Heart left ventricle (tissue), 16 donors: ENCODE measurements at regions of chr5 and their contacts with region 1.

Region 1: GRCh38 chr5:128201065-128201926 is 117.7 kb downstream of the SLC12A2 start:
- DNase-seq: peak; percentile 67 to 88 (median 77)
- ATAC-seq: peak in 3 of 4 donors; percentile 79 to 88 (median 83)
- H3K4me3 ChIP-seq: peak overlapping the region in 6 of 12 donors; percentile 13 to 35 (median 21)
- H3K27ac ChIP-seq: no peak overlapping the region
- H3K4me1 ChIP-seq: peaks cover 0 to 20% (median 5%) of the 10 kb centered on the region in 12 donors
- H3K27me3 ChIP-seq: no peaks in the 10 kb centered on the region
- CTCF ChIP-seq: peak; percentile 82 to 95 (median 88)
- POLR2A ChIP-seq: no peak

Region 2: GRCh38 chr5:127739807-127740384 is 461.4 kb before region 1 on chr5:
- intact Hi-C with region 1: loop called in 1 of 10 experiments (anchors 2 kb)
- DNase-seq: no peak
- ATAC-seq: no peak
- H3K4me3 ChIP-seq: peak overlapping the region in 1 of 12 donors; percentile 21
- H3K27ac ChIP-seq: no peak overlapping the region
- H3K4me1 ChIP-seq: no peaks in the 10 kb centered on the region
- H3K27me3 ChIP-seq: no peaks in the 10 kb centered on the region
- CTCF ChIP-seq: no peak
- POLR2A ChIP-seq: no peak

Region 3: GRCh38 chr5:127746756-127747155 is 454.5 kb before region 1 on chr5:
- intact Hi-C with region 1: loop called in 2 of 10 experiments (anchors 2 kb)
- DNase-seq: no peak
- ATAC-seq: no peak
- H3K4me3 ChIP-seq: no peak overlapping the region
- H3K27ac ChIP-seq: no peak overlapping the region
- H3K4me1 ChIP-seq: no peaks in the 10 kb centered on the region
- H3K27me3 ChIP-seq: no peaks in the 10 kb centered on the region
- CTCF ChIP-seq: peak; percentile 33 to 64 (median 46)
- POLR2A ChIP-seq: no peak

Region 4: DNA sequence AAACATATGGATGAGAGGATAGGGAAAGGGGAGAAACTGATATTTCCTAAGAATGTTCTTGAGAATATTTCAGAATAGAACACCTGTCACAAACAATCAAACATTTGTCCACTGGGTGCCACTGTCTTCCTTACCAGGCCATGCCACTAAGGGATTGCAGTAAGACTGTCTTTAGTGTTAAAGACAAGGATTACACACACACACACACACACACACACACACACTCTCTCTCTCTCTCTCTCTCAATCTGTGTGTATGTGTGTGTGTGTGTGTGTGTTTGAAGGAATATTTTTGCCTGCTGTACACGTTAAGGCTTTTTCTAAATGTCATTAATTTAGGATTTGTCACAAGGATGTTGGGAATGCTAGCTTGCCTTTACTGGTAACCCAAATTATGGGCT is 443.7 kb before region 1 on chr5:
- intact Hi-C with region 1: loop called in 9 of 10 experiments (anchors 2 to 5 kb)
- DNase-seq: peak in 2 of 5 donors; percentile 22 to 23
- ATAC-seq: peak; percentile 47 to 88 (median 82)
- H3K4me3 ChIP-seq: no peak overlapping the region
- H3K27ac ChIP-seq: no peak overlapping the region
- H3K4me1 ChIP-seq: peaks cover 0 to 14% (median 5%) of the 10 kb centered on the region in 12 donors
- H3K27me3 ChIP-seq: no peaks in the 10 kb centered on the region
- CTCF ChIP-seq: peak; percentile 32 to 63 (median 46)
- POLR2A ChIP-seq: no peak

Region 5: DNA sequence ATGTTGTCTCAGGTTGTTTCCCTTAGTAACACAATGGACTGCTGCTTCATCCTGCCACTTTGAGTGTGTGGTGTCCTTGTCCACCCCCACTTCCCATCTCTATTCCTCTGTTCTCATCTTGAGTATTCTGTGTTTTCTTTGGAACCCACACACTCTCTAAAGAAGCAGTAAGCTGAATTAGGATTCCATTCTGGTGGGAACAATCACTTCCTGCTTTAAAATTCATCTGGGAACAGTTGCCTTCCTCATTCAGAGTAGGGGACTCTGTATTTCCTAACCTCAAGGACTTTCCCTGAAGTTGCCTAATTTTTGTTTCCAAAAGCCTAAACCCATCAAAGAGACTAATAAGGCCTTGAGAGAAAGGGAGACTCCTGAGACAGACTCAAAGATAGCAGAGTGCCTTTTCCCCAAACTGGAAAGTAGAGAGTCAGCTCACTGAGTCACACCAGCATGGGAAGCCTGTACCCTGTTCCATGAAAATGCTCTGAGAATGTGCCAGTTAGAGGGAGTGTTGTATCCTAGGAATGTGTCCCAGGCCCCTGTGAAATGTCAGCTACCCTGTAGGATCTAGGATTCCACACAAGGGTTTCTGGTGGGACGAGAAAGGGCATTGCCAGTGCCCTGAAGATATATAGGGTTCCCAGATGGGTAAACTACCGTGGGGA is 434.5 kb before region 1 on chr5:
- intact Hi-C with region 1: loop called in 1 of 10 experiments (anchors 5 kb)
- DNase-seq: no peak
- ATAC-seq: peak in 2 of 4 donors; percentile 27 to 42
- H3K4me3 ChIP-seq: no peak overlapping the region
- H3K27ac ChIP-seq: peak overlapping the region in 3 of 12 donors; percentile 1 to 51 (median 7)
- H3K4me1 ChIP-seq: peaks cover 0 to 23% (median 8%) of the 10 kb centered on the region in 12 donors
- H3K27me3 ChIP-seq: no peaks in the 10 kb centered on the region
- CTCF ChIP-seq: no peak
- POLR2A ChIP-seq: no peak

Region 6: DNA sequence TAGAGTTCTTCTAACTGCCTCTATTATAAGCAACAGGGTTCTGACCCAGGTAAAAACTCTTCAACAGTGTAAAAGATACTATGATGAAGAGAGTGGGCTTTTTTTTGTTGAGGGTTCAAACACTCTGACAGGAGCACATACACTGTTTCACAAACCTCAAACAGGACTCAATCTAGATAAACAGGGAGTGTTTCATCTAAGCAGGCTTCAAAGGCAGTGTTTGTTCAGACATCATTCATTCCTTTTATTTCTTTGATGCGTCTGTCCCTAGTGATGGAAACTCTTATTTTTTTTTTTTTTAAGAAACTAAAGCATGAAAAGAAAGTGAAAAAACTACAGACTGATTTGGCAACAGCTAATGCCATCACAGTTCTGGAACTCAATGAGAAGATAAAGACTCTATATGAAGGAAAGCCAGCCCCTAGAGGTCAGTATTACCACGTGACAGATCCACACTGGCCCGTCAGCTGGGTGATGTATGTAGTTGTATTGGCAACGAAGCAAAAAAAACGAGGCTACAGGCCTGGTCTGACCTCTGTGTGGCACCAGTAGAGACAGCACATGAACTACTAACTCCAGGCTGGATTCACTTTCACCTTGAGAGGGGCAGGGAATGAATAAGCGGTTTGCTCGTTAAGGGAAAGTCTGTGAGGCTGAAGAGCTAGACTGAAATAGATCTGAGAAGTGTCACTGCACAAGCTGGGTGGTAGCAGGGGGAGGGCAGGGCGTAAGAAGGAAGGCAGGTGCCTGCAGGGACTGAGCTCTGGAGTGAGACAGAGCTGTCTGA is 325.9 kb before region 1 on chr5:
- intact Hi-C with region 1: loop called in 5 of 10 experiments (anchors 2 to 10 kb)
- DNase-seq: peak; percentile 40 to 80 (median 61)
- ATAC-seq: peak; percentile 83 to 95 (median 93)
- H3K4me3 ChIP-seq: no peak overlapping the region
- H3K27ac ChIP-seq: peak overlapping the region; percentile 18 to 86 (median 68)
- H3K4me1 ChIP-seq: peaks cover 3 to 43% (median 21%) of the 10 kb centered on the region in 12 donors
- H3K27me3 ChIP-seq: no peaks in the 10 kb centered on the region
- CTCF ChIP-seq: peak in 11 of 12 donors; percentile 11 to 54 (median 31)
- POLR2A ChIP-seq: no peak